ENCODE measurements at regions of chr7 and their contacts with region 1.

Region 1: DNA sequence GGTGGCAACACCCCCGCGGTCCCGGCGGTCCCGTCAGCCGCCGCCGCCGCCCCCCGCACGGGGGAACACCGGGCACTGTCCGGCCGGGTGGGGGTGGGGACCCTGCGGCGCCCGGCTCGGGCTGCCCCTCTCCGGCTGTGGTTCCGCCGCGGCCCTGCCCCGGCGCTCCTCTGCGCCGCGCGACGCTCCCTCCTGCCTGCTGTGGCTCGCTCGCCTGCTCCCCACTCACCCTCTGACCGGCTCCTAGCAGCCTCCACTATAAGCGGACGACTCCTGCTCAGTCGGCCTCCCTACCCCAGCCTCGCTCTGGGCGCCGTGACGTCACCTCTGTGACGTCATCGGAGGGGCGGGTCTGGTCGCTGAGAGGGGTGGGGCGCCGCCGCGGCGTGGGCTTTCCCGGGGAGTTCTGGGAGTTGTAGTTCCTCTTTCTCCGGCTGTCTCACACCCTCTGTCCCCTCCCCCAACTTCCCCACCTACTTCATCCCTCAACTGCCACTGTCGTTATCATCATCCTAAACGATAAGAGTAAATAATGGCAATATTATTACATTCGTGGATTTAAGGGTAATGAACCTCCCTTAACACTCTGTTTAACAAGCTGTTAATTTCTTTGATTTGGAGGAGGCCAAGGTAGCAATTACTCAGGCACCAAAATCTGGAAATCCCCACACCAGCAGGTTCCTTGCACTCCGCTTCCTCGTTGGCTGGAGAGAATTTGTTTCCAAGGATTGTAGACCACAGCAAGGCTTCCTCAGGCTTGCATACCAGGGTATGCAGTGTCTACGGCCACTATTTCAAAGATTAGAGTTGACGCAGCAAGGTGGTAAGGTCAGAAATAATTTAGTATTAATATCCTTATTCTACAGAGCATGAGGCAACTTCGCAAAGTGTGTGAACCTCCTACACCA is at the start of gene UBE2H:
- DNase-seq: peak; percentile 72 to 96
- H3K4me3 ChIP-seq: peak within 1 kb of the TSS; percentile 80 to 92
- H3K27ac ChIP-seq: peak within 1 kb of the TSS; percentile 91
- H3K4me1 ChIP-seq: peaks cover 6 to 13% of the 10 kb centered on the region in 2 donors
- H3K27me3 ChIP-seq: no peaks in the 10 kb centered on the region
- CTCF ChIP-seq: no peak
- total RNA-seq, gene UBE2H: 83.9 TPM

Region 2: GRCh38 chr7:129864042-129864441 is 88.9 kb before region 1 on chr7:
- intact Hi-C with region 1: loop called (anchors 2 kb)
- DNase-seq: peak in 1 of 2 donors; percentile 89
- H3K4me3 ChIP-seq: no peak overlapping the region
- H3K27ac ChIP-seq: peak overlapping the region; percentile 88 to 96
- H3K4me1 ChIP-seq: peaks cover 13 to 79% of the 10 kb centered on the region in 2 donors
- H3K27me3 ChIP-seq: no peaks in the 10 kb centered on the region
- CTCF ChIP-seq: no peak

Region 3: DNA sequence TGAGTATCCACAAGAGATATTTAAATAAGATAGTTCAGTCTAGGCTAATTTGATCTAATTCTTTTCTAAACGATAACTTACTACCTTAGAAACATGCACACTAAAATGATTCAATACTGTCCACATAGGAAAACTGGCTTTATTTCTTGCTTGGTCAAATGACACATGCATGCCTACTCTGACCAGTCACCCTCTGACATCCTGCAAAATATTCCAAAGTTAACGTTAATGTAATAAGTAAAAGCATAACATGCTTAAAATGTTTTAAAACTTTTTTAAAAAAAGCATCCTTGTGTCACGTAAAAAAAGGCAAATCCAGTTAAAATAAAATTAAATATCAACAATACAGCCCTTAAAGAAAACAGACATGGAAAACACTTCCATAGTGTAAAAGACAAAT is 70.4 kb before region 1 on chr7:
- intact Hi-C with region 1: no loop called
- DNase-seq: no peak
- H3K4me3 ChIP-seq: no peak overlapping the region
- H3K27ac ChIP-seq: peak overlapping the region; percentile 48 to 51
- H3K4me1 ChIP-seq: peaks cover 5 to 41% of the 10 kb centered on the region in 2 donors
- H3K27me3 ChIP-seq: no peaks in the 10 kb centered on the region
- CTCF ChIP-seq: no peak

Region 4: GRCh38 chr7:129923709-129924108 is 29.2 kb before region 1 on chr7:
- intact Hi-C with region 1: loop called (anchors 2 kb)
- DNase-seq: no peak
- H3K4me3 ChIP-seq: no peak overlapping the region
- H3K27ac ChIP-seq: peak overlapping the region; percentile 13 to 35
- H3K4me1 ChIP-seq: peaks cover 3 to 18% of the 10 kb centered on the region in 2 donors
- H3K27me3 ChIP-seq: no peaks in the 10 kb centered on the region
- CTCF ChIP-seq: no peak

Region 5: DNA sequence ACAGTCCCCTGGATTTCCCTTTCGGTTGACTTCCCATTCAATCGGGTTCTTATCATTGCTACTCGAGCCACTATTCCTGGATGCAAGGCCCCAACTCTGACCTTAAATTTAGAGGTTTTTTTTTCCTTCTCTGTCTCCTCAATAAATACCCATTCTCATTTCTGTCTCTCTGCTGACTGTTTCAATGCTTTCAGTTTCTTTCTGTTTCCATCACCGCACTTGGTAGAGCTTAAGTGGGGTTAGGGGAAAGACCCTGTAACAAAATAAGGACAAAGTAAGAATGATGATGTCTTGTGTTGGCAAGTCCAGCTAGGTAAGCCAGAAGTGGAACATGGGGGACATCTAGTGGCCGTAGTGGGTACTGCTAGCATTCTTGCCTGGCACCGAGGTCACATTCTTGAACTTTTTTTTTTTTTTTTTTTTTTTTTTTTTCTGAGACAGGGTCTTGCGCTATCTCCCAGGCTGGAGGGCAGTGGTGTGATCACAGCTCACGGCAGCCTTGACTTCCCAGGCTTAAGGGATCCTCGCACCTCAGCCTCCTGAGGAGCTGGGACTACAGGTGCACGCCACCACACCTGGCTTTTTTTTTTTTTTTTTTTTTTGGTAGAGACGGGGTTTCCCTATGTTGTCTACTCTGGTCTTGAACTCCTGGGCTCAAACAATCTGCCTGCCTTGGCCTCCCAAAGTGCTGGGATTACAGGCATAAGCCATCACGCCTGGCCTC is 57.9 kb after region 1 on chr7:
- intact Hi-C with region 1: loop called (anchors 1 kb)
- DNase-seq: peak; percentile 43 to 92
- H3K4me3 ChIP-seq: no peak overlapping the region
- H3K27ac ChIP-seq: peak overlapping the region; percentile 75 to 78
- H3K4me1 ChIP-seq: peaks cover 10 to 13% of the 10 kb centered on the region in 2 donors
- H3K27me3 ChIP-seq: no peaks in the 10 kb centered on the region
- CTCF ChIP-seq: peak; percentile 84 to 90 (median 90)